CD8-positive, alpha-beta memory T cell (primary cell): ENCODE measurements at regions of chr6 and their contacts with region 1.

Region 1: DNA sequence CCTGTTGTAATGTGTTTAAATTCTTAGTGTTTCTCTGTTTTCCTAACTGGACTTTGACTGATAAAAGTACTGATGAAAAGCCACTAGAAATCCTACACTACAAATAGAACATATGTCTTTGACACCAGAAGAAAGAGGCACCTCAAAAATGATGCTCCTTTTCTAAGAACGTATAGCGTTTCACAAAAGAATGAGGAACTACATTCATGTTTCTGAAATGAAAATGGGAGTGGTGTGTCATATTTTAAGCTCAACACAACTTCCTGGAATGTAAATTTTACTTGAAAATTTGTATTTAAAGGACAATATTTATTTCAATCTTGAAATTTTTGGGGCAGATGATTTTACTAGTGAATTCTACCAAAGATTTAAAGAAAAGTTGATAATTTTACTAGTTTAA is 35.3 kb downstream of the KIAA0408 start:
- DNase-seq: no peak
- H3K4me3 ChIP-seq: no peak overlapping the region
- H3K4me3 Mint-ChIP-seq: no peak overlapping the region
- H3K27ac ChIP-seq: no peak overlapping the region
- H3K27ac Mint-ChIP-seq: no peak overlapping the region
- H3K4me1 ChIP-seq: no peaks in the 10 kb centered on the region
- H3K4me1 Mint-ChIP-seq: peaks cover 5 to 6% (median 6%) of the 10 kb centered on the region in 3 donors
- H3K27me3 ChIP-seq: no peaks in the 10 kb centered on the region
- H3K27me3 Mint-ChIP-seq: peaks cover 5 to 10% of the 10 kb centered on the region in 2 donors

Region 2: DNA sequence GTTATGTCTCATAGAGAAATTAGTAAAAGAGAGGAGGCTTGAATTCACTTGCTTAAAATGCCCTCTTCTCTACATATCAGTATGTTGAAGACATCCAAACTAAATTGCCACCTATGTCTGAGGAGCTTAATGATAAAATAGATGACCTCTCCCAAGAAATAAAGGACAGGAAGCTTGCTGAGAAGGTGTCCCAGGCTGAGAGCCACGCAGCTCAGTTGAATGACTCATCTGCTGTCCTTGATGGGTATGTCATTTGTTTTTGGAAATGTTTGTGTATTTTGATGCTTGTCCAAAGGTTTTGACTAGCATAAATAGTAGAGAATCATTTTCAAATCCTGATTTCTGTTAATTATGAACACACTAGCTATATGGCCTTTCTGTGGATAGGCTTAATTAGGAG is 1978.3 kb after region 1 on chr6:
- CTCF ChIA-PET with region 1: no interaction called
- POLR2A ChIA-PET with region 1: interaction called, 11 read pairs
- DNase-seq: no peak
- H3K4me3 ChIP-seq: no peak overlapping the region
- H3K4me3 Mint-ChIP-seq: no peak overlapping the region
- H3K27ac ChIP-seq: no peak overlapping the region
- H3K27ac Mint-ChIP-seq: no peak overlapping the region
- H3K4me1 ChIP-seq: no peaks in the 10 kb centered on the region
- H3K4me1 Mint-ChIP-seq: no peaks in the 10 kb centered on the region
- H3K27me3 ChIP-seq: no peaks in the 10 kb centered on the region
- H3K27me3 Mint-ChIP-seq: peaks cover 1 to 20% of the 10 kb centered on the region in 2 donors